AG04449 (cell line): ENCODE measurements at regions of chr7 and their contacts with region 1.

Region 1: DNA sequence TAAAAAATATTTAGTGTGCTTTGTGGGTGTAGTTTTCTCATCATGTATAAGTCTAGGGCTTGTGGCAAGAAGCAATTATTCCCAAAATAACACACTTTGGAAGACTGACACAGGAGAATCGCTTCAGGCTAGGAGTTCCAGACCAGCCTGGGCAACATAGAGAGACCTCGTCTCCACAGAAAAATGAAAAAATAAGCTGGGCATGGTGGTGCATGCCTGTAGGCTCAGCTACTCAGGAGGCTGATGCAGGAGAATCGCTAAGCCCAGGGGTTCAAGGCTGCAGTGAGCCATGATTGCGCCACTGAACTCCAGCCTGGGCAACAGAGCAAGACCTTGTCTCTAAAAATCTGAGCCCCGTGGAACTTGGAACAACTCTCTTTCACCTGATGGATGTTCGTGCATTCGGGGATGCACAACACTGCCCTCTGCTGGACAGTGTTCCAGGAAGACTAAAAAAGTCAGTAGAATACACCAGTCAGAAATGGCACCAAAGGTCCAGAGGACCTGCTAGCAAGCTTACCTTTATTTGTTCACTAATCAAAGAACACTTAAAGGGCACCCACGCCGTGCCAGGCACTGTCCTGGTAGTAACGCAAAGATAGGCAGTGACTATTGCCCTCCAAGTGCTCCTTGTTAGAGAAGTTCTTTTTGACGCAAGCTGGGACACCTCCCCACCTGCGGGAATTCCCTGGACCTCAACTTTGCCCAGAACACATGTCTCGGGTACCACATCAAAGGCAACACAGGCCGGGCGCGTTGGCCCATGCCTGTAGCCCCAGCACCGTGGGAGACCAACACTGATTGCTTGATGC is 81.9 kb upstream of the CALN1 start:
- DNase-seq: no peak
- H3K4me3 ChIP-seq: no peak overlapping the region
- CTCF ChIP-seq: peak; percentile 57

Region 2: DNA sequence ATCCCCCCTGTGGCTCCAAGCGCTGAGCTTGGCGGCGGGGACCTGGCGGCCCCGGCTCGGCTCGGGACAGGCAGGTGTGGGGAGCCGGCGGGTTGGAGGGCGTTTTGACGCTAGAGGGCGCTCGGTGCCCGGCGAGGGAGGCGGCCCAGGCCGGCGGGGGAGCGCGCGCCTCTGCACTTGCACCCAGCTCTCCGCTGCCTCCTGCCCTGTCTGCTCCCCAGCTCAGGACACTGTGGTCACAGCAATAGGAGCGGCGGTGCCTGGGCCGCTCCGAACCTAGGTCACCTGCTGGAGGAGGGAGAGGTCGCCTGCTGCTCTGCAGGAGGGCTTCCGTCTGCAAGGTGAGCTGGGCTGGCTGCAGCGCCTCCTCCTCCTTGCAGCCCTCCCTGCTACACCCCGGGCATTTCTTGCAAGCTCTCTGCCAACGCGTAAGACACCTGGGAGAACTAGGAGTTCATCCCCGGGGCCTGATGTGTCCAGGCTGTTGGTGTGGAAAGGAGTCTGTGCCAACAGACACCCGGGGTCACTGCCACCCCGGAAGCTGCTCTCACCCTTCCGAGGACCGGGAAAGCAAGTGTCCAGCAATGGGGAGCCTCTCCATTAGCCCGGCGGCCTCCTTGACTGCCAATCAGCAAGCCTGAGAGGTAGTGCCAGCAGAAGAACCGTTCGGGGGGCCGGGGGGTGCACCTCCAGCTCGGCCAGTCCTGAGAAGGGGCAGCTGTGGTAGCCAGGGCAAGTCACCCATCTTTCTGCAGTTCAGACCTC is 741.7 kb before region 1 on chr7:
- CTCF ChIA-PET with region 1: interaction called, 42 read pairs
- POLR2A ChIA-PET with region 1: no interaction called
- DNase-seq: no peak
- H3K4me3 ChIP-seq: no peak overlapping the region
- CTCF ChIP-seq: peak; percentile 80

Region 3: GRCh38 chr7:72538856-72539255 is 44.8 kb after region 1 on chr7:
- CTCF ChIA-PET with region 1: no interaction called
- POLR2A ChIA-PET with region 1: no interaction called
- DNase-seq: no peak
- H3K4me3 ChIP-seq: no peak overlapping the region
- CTCF ChIP-seq: no peak